ENCODE measurements at regions of chr12 and their contacts with region 1.

Region 1: GRCh38 chr12:6752921-6753771 is at the start of gene MLF2:
- DNase-seq: peak; percentile 99
- ATAC-seq: peak; percentile 95
- H3K4me3 Mint-ChIP-seq: peak within 1 kb of the TSS; percentile 91
- H3K27ac Mint-ChIP-seq: peak within 1 kb of the TSS; percentile 99
- H3K4me1 Mint-ChIP-seq: peaks cover 20% of the 10 kb centered on the region
- H3K27me3 Mint-ChIP-seq: no peaks in the 10 kb centered on the region
- CTCF ChIP-seq: no peak
- total RNA-seq, gene MLF2: 149 to 151 TPM

Region 2: DNA sequence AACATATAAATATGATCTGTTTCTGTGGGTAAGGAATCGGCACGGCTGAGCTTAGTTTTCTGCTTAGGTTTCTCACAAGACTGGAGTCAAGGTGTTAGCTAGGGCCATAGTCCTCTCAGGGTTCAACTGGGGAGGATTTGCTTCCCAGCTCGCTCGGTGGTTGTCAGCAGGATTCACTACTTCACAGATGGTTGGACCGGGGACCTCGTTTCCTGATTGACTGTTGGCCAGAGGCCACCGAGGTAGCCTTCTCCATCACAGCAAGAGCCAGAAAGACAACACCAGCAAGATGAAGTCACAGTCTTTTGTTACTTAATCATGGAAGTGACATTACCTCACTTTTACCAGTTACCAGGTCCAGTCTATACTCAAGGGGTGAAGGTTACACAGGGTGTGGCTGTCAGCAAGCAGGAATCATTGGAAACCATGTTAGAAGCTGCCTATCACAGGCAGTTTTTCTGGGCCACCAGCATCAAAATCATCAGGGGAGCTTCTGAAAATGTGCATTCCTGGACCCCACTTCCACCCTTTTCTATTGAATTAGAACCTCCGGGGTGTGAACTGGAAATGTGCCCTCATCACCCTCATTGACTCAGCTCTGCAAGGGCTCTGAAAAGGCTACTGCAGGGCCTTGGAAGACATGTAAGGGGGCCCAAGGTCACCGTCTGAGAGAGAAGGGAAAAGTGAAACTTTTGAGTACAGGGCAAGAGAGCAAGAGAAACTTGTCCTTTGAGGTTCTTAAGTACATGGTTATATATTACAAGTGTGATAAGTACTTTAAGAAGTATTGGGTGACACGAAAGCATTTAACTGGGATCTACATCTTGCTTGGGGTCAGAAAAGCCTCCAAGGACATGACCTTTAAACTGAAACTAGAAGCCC is 18.4 kb before region 1 on chr12:
- CTCF ChIA-PET with region 1: interaction called, 15 read pairs
- POLR2A ChIA-PET with region 1: no interaction called
- intact Hi-C with region 1: no loop called
- DNase-seq: no peak
- ATAC-seq: no peak
- H3K4me3 Mint-ChIP-seq: no peak overlapping the region
- H3K27ac Mint-ChIP-seq: peak overlapping the region; percentile 57
- H3K4me1 Mint-ChIP-seq: peaks cover 6% of the 10 kb centered on the region
- H3K27me3 Mint-ChIP-seq: no peaks in the 10 kb centered on the region
- CTCF ChIP-seq: no peak

Region 3: GRCh38 chr12:6771091-6771495 is 17.9 kb after region 1 on chr12:
- CTCF ChIA-PET with region 1: interaction called, 117 read pairs
- POLR2A ChIA-PET with region 1: interaction called, 31 read pairs
- intact Hi-C with region 1: no loop called
- DNase-seq: no peak
- ATAC-seq: no peak
- H3K4me3 Mint-ChIP-seq: peak overlapping the region; percentile 89
- H3K27ac Mint-ChIP-seq: peak overlapping the region; percentile 87
- H3K4me1 Mint-ChIP-seq: peaks cover 52% of the 10 kb centered on the region
- H3K27me3 Mint-ChIP-seq: peaks cover 7% of the 10 kb centered on the region
- CTCF ChIP-seq: no peak

Region 4: DNA sequence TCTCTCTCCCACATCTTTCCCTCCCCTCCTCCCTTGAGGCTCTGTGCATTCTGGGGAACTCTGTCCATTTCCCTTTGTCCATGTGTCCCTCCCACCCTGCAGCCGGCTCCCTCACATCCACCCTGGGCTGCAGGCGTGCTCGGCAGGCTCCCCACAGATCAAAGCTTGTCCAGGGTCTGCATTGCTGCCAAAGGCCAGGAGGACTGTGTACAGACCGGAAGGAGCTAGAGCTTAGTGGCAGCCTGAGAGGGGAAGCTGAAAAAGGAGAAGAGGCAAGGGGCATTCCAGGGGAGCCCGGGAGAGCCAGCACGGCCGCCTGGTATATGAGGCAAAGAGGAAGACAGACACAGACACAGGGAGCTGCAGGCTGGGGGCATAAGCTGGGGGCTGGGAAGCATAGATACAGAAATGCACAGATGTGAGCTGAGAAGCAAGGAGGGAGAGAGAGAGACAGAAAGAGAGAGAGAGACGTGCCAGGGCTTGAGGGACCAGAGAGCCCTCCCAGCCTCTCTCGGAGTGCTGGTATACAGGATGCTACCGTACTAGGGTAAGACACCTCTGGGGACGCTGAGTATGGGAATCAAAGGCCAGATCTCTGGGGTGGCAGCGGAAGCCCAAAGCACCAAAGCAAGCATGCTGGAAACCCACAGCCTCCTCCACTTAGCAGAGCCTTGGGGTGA is 39.5 kb after region 1 on chr12:
- CTCF ChIA-PET with region 1: interaction called, 17 read pairs
- POLR2A ChIA-PET with region 1: interaction called, 7 read pairs
- intact Hi-C with region 1: no loop called
- DNase-seq: peak; percentile 62
- ATAC-seq: peak; percentile 81
- H3K4me3 Mint-ChIP-seq: peak overlapping the region; percentile 33
- H3K27ac Mint-ChIP-seq: peak overlapping the region; percentile 14
- H3K4me1 Mint-ChIP-seq: peaks cover 49% of the 10 kb centered on the region
- H3K27me3 Mint-ChIP-seq: peaks cover 14% of the 10 kb centered on the region
- CTCF ChIP-seq: no peak

Region 5: DNA sequence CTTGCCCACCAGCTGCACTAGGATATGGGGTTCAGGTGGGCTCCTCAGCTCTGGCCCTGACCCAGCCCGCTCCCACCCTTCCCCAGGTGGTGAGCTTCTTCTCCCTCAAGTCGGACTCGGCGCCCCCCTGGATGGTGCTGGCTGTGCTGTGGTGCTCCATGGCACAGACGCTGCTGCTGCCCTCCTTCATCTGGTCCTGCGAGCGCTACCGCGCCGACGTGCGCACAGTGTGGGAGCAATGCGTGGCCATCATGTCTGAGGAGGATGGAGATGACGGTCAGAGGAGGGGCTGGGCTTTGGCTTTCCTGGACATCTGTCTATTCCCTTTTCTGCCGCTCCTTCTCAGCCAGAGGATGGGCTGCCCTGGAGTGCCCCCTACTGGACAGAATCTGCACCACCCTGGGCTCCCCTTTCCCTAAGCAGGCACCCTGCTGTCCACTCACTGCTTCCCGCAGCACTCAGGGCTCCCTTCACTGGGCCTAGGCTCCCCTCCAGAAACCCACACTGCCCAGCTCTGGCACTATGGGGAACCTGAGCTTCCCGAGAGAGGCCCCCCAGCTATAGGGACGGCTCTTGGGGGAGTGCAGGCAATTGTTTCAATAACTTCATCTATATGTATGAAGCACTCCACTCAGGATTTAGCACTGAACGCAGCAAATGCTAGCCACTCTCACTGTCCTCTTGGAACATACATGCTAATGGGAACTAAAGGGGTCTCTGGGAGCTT is 72.4 kb after region 1 on chr12:
- CTCF ChIA-PET with region 1: interaction called, 341 read pairs
- POLR2A ChIA-PET with region 1: interaction called, 16 read pairs
- intact Hi-C with region 1: loop called (anchors 5 kb)
- DNase-seq: peak; percentile 89
- ATAC-seq: peak; percentile 70
- H3K4me3 Mint-ChIP-seq: no peak overlapping the region
- H3K27ac Mint-ChIP-seq: no peak overlapping the region
- H3K4me1 Mint-ChIP-seq: peaks cover 30% of the 10 kb centered on the region
- H3K27me3 Mint-ChIP-seq: peaks cover 70% of the 10 kb centered on the region
- CTCF ChIP-seq: peak; percentile 93

Region 6: DNA sequence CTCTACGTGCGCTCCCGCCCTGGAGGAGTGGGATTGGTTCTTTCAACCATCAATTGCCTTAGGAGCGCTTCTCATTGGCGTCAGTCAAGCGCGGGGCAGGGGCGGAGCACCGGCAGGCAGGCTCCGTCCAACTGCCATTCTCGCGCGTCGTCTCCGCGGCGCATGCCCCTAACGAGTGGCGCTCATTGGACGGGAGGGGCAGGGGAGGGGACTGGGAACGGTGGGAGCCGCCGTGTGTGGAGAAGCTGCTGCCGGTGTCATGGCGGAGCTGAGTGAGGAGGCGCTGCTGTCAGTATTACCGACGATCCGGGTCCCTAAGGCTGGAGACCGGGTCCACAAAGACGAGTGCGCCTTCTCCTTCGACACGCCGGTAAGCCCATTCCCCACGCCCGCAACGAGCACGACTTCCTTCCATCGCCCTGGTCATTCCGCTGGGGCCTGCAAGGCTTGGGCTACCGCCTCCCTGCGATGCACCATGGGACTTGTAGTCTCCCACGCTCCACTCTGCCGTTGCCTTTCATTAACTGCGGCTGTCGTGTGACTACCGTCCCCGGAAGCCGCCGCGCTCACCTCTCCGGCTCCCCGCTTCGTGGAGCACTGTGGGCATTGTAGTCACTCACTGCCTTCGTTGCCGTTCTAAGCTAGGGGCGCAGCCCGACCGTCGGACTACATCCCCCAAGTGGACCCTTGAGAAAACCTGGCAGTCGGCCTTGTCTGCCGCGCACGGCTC is 98.9 kb after region 1 on chr12 and contains the start of gene USP5:
- CTCF ChIA-PET with region 1: interaction called, 29 read pairs
- POLR2A ChIA-PET with region 1: interaction called, 18 read pairs
- intact Hi-C with region 1: no loop called
- DNase-seq: peak; percentile 99
- ATAC-seq: peak; percentile 79
- H3K4me3 Mint-ChIP-seq: peak within 1 kb of the TSS; percentile 86
- H3K27ac Mint-ChIP-seq: peak within 1 kb of the TSS; percentile 98
- H3K4me1 Mint-ChIP-seq: peaks cover 29% of the 10 kb centered on the region
- H3K27me3 Mint-ChIP-seq: no peaks in the 10 kb centered on the region
- CTCF ChIP-seq: no peak
- total RNA-seq, gene USP5: 109 to 112 TPM

Region 7: GRCh38 chr12:6873094-6874014 is 120.2 kb after region 1 on chr12 and contains the start of gene SPSB2:
- CTCF ChIA-PET with region 1: interaction called, 24 read pairs
- POLR2A ChIA-PET with region 1: interaction called, 14 read pairs
- intact Hi-C with region 1: no loop called
- DNase-seq: peak; percentile 99
- ATAC-seq: peak; percentile 82
- H3K4me3 Mint-ChIP-seq: peak within 1 kb of the TSS; percentile 91
- H3K27ac Mint-ChIP-seq: peak within 1 kb of the TSS; percentile 89
- H3K4me1 Mint-ChIP-seq: peaks cover 45% of the 10 kb centered on the region
- H3K27me3 Mint-ChIP-seq: no peaks in the 10 kb centered on the region
- CTCF ChIP-seq: no peak
- total RNA-seq, gene SPSB2: 2.2 to 2.6 TPM

Region 8: DNA sequence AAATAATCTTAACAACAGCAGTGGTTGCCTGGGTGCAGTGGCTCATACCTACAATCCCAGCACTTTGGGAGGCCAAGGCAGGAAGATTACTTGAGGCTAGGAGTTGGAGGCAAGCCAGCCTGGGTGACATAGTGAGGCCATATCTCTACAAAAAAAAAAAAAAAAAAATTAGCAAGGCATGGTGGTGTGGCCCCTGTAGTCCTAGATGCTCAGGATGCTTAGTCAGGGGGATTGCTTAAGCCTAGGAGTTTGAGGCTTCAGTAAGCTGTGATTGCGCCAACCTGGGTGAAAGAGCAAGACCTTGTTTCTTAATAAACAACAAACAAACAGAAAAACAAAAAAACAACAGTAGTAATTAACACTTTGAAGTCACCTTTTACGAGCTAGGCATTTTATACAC is 550.1 kb after region 1 on chr12:
- CTCF ChIA-PET with region 1: no interaction called
- POLR2A ChIA-PET with region 1: no interaction called
- intact Hi-C with region 1: no loop called
- DNase-seq: no peak
- ATAC-seq: no peak
- H3K4me3 Mint-ChIP-seq: no peak overlapping the region
- H3K27ac Mint-ChIP-seq: no peak overlapping the region
- H3K4me1 Mint-ChIP-seq: no peaks in the 10 kb centered on the region
- H3K27me3 Mint-ChIP-seq: peaks cover 2% of the 10 kb centered on the region
- CTCF ChIP-seq: no peak

Measured in activated CD8-positive, alpha-beta T cell treated with anti-CD3 and anti-CD28 coated beads for 36 hours (primary cell).